Right ventricle myocardium superior (tissue), 1 donor: ENCODE measurements at regions of chr9 and their contacts with region 1.

Region 1: GRCh38 chr9:118829334-118829733 is 539.9 kb downstream of the BRINP1 start:
- DNase-seq: no peak
- ATAC-seq: peak; percentile 77

Region 2: GRCh38 chr9:118670011-118670953 is 159.1 kb before region 1 on chr9:
- intact Hi-C with region 1: no loop called
- DNase-seq: no peak
- ATAC-seq: no peak

Region 3: DNA sequence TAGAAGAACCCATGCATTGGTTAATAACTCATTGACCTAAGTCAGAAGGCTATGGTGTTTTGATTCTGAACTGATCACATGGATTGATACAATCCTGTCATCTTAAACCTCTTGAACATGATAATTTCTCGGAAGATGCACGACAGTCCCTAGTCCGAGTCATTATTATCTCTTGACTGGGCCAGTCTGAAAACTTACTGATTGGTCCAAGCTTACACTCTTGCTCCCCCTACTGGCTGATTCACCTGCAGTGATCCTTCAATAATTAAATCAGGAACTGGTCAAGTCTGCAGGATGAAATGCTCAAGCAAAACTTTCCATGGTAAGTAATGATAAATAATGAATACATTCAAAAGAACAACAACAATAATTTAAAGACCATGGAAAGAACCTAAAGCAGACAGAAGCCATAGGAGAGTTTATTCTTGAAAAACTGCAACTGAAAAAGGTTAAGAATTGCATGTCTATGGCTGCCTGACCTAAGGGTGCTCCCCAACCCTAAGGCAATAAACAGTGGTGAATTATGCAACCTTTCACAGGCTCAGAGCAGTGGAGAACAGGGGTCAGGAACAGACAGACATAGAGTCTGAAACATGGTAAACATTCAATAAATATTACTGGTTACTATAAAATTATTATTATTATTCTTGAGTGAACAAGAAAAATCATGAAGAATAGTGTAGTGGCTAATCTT is 460.6 kb after region 1 on chr9:
- intact Hi-C with region 1: loop called (anchors 2 kb)
- DNase-seq: no peak
- ATAC-seq: peak; percentile 79

Region 4: DNA sequence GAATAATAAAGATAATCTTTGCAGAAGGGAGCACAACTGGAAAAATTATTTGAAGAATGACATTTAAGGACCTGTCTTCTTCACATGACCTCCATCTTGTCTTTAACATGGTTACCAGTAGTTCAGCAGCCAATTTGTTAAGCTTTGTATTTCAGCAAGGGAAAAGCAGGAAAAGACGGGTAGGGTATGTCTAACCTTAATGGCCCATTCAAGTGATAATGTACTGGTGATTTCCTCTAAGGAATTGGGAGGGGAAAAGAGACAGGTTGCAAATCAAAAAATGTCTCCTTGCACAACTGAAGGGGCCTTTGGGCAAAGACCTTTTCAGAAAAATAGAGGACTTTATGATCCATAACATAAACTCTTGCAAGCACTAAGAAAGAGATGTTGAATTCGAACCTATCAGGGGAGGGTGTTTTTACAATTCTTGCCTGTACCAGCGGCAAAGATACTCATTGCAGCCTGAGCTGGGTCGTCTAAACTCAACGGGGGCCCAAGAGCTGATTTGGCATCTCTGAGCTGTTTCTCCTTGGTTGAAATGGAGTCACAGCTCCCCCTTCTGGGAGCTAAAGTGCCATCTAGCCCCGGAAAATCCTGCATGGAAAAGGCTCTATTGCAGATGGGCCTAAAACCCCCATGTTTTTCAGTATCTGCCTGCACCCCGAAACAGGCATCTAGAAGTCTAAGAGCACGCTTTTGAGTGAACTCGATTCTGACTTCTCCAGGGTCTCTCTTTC is 536.1 kb after region 1 on chr9:
- intact Hi-C with region 1: loop called (anchors 10 kb)
- DNase-seq: no peak
- ATAC-seq: no peak